Common myeloid progenitor, CD34-positive (primary cell): ENCODE measurements at regions of chr1 and their contacts with region 1.

Region 1: DNA sequence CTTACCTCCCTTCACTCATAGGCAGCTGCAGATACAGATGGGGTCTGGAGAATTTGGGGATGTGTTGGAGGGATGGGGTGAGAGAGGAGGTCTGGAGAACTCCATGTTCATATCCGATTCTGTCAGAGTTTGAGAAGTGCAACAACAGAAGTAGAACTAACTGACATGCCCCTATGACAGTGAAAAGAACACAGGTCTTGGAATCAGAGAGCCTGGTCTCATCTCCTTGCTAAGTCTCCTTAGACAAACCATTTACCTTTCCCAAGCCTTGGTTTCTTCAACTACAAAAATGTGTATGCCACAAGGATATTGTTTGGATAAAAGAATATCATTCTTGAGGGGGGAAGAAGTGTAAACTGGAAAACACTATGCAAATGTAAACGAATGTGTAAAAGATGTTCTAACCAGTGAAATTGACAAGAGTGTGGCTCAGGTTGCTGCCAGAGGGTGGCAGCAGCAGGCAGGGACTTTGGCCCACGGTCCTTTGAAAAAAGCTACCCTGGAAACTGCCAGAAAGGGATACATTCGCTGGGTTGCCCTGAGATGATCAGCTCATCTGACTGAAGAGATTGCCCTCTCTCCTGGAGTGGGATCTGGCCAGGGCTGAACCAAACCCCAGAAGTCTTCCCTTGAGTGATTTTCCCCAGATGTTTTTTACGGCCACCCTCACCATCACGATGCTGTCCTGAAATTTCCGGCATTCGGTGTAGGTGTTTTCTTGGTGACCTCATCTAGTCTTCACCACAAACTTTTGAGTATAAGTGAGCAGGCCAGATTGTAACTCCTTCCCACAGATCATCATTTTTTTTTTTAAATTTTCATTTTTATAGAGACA is 17.0 kb upstream of the CD2 start:
- DNase-seq: peak; percentile 57 to 83 (median 76)
- H3K4me3 ChIP-seq: no peak overlapping the region
- H3K27ac ChIP-seq: no peak overlapping the region
- H3K4me1 ChIP-seq: peaks cover 0 to 39% (median 23%) of the 10 kb centered on the region in 4 experiments
- H3K27me3 ChIP-seq: no peaks in the 10 kb centered on the region

Region 2: DNA sequence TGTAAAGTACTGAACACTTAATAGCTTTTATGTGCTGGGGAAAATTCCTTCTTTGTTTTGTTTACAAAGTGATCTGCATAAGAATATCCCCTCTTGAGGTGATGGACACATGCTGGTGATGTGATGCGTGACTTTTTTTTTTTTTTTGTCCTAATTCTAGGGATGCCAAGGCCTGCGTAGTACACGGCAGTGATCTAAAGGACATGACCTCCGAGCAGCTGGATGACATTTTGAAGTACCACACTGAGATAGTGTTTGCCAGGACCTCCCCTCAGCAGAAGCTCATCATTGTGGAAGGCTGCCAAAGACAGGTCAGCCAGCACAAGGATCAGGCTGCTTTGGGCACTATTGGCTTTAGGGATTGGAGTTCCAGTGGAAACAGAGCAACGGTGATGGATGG is 339.5 kb before region 1 on chr1:
- CTCF ChIA-PET with region 1: no interaction called
- POLR2A ChIA-PET with region 1: no interaction called
- DNase-seq: no peak
- H3K4me3 ChIP-seq: no peak overlapping the region
- H3K27ac ChIP-seq: no peak overlapping the region
- H3K4me1 ChIP-seq: no peaks in the 10 kb centered on the region
- H3K27me3 ChIP-seq: no peaks in the 10 kb centered on the region

Region 3: DNA sequence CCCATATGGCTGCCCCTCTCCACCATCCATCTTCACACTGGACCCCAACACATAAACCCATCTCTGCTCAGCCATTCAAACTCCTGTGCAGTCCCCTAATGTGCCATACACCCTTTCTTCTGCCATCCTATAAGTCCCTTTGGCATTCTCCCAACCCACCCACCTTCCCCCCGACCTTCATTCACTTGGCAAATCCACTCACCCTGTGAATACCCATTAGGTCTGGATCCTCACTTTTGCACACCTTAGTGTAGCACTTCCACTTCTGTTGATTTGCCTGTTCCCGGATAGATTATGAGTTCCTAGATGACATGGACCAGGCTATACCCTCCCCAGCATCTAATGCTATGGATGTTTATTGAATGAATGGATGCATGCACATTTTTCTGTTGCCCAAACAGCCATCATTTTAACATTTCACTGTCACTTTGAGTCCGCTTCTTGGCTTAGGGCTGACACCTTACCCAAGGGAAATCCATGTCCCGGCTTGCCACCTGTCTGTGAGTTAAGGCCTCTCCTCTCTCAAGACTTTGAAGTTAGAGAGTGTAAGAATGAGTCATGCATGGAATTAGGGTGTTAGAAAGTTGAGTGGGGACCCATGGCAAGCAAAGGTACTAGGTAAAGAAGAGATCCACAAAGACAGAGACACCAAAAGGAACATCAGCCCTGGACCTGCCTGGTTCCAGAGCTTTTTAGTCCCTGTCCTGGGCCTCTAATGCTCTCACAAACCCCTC is 329.2 kb before region 1 on chr1:
- CTCF ChIA-PET with region 1: no interaction called
- POLR2A ChIA-PET with region 1: no interaction called
- DNase-seq: no peak
- H3K4me3 ChIP-seq: no peak overlapping the region
- H3K27ac ChIP-seq: no peak overlapping the region
- H3K4me1 ChIP-seq: no peaks in the 10 kb centered on the region
- H3K27me3 ChIP-seq: no peaks in the 10 kb centered on the region

Region 4: GRCh38 chr1:116748272-116748671 is 11.0 kb after region 1 on chr1:
- CTCF ChIA-PET with region 1: interaction called, 22 read pairs
- POLR2A ChIA-PET with region 1: no interaction called
- DNase-seq: no peak
- H3K4me3 ChIP-seq: no peak overlapping the region
- H3K27ac ChIP-seq: no peak overlapping the region
- H3K4me1 ChIP-seq: peaks cover 4 to 16% (median 10%) of the 10 kb centered on the region in 4 experiments
- H3K27me3 ChIP-seq: no peaks in the 10 kb centered on the region

Region 5: DNA sequence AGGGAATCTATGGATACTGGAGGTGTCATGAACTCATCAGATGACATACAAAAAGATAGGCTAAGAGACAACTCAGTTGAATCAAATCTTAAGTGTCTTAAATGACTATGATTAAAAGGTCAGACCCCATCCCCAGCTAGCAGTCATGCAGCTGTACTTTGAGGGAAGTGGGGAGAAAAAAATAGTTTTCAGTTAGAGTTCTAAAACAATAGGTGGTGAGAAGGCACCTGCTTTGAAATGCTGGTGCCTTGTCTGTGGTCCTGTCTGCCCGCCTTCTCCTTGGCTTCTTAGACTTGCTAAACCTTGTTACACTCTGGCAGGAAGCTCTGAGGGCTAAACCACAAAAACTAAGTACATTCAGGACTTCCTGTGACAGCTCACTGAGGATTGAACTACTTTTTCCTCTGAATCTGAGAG is 32.3 kb after region 1 on chr1:
- CTCF ChIA-PET with region 1: interaction called, 35 read pairs
- POLR2A ChIA-PET with region 1: interaction called, 3 read pairs
- DNase-seq: peak; percentile 83 to 98 (median 97)
- H3K4me3 ChIP-seq: peak overlapping the region in 3 of 7 experiments; percentile 20 to 41 (median 38)
- H3K27ac ChIP-seq: no peak overlapping the region
- H3K4me1 ChIP-seq: peaks cover 19 to 39% (median 31%) of the 10 kb centered on the region in 4 experiments
- H3K27me3 ChIP-seq: peaks cover 0 to 4% (median 0%) of the 10 kb centered on the region in 5 experiments

Region 6: DNA sequence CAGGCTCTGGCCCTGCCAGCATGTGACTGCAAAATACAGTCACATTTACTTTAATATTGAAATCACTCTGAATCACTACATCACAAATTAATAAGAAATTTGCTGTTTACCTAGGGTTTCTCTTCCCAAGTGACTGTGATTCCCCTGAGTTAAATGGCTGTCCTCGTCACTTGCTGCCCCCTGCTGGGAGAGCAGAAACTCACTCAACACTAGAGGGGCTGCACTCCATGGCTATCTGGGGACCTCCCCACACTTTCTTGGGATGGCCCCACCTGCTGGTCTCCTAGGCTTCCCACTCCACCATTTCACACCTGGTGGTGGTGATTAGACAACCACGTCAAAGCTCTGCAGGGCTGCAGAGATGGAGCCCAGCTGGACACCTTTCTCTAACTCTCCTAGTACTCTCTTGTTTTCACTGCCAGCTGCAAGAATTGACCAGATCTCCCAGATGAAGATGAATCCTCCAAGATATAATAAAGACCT is 80.4 kb after region 1 on chr1:
- CTCF ChIA-PET with region 1: interaction called, 76 read pairs
- POLR2A ChIA-PET with region 1: no interaction called
- DNase-seq: peak; percentile 77 to 83 (median 78)
- H3K4me3 ChIP-seq: no peak overlapping the region
- H3K27ac ChIP-seq: no peak overlapping the region
- H3K4me1 ChIP-seq: peaks cover 4 to 15% (median 10%) of the 10 kb centered on the region in 4 experiments
- H3K27me3 ChIP-seq: no peaks in the 10 kb centered on the region

Region 7: GRCh38 chr1:116909510-116910378 is 172.5 kb after region 1 on chr1 and contains the start of gene PTGFRN:
- CTCF ChIA-PET with region 1: no interaction called
- POLR2A ChIA-PET with region 1: no interaction called
- DNase-seq: peak; percentile 2 to 41 (median 15)
- H3K4me3 ChIP-seq: peak within 1 kb of the TSS; percentile 29 to 73 (median 60)
- H3K27ac ChIP-seq: no peak within 1 kb of the TSS
- H3K4me1 ChIP-seq: peaks cover 0 to 15% (median 14%) of the 10 kb centered on the region in 4 experiments
- H3K27me3 ChIP-seq: peaks cover 3 to 53% (median 33%) of the 10 kb centered on the region in 5 experiments

Region 8: GRCh38 chr1:117059678-117060440 is 322.6 kb after region 1 on chr1 and contains the start of gene TTF2:
- CTCF ChIA-PET with region 1: interaction called, 25 read pairs
- POLR2A ChIA-PET with region 1: no interaction called
- DNase-seq: peak; percentile 99 to 100 (median 100)
- H3K4me3 ChIP-seq: peak within 1 kb of the TSS; percentile 68 to 97 (median 90)
- H3K27ac ChIP-seq: peak within 1 kb of the TSS; percentile 64 to 79
- H3K4me1 ChIP-seq: peaks cover 3 to 40% (median 19%) of the 10 kb centered on the region in 4 experiments
- H3K27me3 ChIP-seq: no peaks in the 10 kb centered on the region